ENCODE measurements at regions of chr1 and their contacts with region 1.

Region 1: DNA sequence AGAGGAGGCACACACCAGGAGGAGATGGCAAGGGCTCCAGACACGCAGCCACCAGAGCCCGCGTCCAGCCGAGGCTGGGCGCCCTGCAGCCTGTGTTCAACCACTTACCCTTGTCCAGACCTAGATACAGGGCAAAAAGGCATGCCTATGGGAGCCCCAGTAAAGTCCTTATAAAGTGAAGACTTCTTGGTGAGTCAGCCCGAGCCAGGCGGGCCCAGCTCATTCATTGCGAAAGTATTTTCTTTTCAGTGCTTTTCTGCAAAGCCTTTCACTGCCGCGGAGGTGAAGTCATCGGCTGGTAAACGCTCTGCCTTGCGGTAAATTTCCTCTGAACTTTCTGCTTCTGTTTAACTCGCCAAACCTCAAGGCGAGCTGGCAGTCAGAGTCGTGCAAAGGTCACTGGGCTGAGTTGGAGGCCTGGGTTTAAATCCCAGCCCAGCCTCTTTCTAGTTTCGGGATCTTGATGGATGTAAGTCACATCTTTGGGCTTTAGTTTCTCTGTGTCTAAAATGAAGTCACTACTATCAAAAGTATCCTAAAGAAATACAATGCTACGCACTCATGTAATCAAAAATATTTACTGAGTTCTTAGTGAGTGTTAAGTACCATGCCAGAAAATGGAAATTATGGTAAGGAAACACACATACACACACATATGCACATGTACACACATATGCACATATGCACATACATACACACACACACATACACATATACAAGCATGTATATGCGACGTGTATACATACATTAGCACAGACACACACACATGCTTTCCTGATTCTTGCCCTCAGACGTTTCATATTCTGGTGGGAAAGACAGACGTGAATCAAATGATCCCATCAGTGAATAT is 54.7 kb upstream of the IFFO2 start:
- DNase-seq: peak; percentile 43
- ATAC-seq: peak; percentile 98
- H3K4me3 ChIP-seq: no peak overlapping the region
- H3K27ac ChIP-seq: no peak overlapping the region
- H3K4me1 ChIP-seq: peaks cover 6% of the 10 kb centered on the region
- H3K27me3 ChIP-seq: no peaks in the 10 kb centered on the region; a peak in 2 of 4 replicates
- CTCF ChIP-seq: no peak
- EP300 ChIP-seq: no peak
- POLR2A ChIP-seq: no peak
- RAD21 ChIP-seq: no peak

Region 2: DNA sequence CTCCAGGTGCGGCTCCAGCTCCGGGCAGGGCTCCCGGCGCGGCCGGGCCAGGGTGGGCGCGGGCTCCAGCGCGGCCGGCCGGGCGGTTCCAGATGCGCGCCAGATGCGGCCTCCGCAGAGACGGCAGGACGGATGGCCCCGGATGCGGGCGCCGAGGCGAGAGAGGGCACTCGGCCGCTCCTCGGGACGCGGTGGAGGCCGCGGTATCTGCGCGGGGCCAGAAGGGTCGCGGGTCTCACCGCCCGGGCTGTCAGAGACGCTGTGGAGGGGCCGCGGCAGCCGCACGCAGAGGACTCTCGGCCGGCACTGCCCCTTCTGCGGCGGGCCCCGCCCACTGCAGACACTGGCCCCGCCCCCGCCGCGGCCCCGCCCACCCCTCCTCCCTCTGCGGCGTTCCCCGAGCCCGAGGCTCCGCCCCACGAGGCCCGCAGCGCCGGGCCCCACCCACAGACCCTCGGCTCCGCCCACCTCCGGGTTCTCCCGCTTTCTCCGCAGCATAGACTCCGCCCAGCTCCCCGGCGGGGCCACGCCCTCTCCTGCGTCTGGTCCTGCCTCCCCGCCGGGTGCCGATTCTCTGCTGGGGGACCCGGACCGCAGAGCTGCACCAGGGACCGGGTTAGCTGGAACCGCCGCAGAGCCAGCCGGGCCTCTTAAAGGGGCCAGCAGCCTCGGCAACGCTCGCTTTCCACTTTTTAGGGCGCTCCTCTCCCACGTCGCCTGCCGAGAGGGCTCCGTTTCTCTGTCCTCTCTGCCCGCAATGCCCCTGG is 54.7 kb before region 1 on chr1 and contains the start of gene IFFO2:
- CTCF ChIA-PET with region 1: no interaction called
- POLR2A ChIA-PET with region 1: interaction called, 3 read pairs
- RAD21 ChIA-PET with region 1: no interaction called
- SMC1A ChIA-PET with region 1: no interaction called
- in situ Hi-C with region 1: no loop called
- intact Hi-C with region 1: loop called (anchors 1 kb)
- DNase-seq: peak; percentile 34
- ATAC-seq: peak; percentile 80
- H3K4me3 ChIP-seq: peak within 1 kb of the TSS; percentile 70
- H3K27ac ChIP-seq: peak within 1 kb of the TSS; percentile 8; the same call in 1 of the 2 replicates
- H3K4me1 ChIP-seq: peaks cover 41% of the 10 kb centered on the region
- H3K27me3 ChIP-seq: peaks cover 1 to 3% of the 10 kb centered on the region in 2 experiments; a peak in 3 of 4 replicates
- CTCF ChIP-seq: no peak
- EP300 ChIP-seq: no peak
- POLR2A ChIP-seq: peak; percentile 81
- RAD21 ChIP-seq: no peak
- polyA plus RNA-seq, gene IFFO2: 1.2 to 1.9 TPM

Region 3: DNA sequence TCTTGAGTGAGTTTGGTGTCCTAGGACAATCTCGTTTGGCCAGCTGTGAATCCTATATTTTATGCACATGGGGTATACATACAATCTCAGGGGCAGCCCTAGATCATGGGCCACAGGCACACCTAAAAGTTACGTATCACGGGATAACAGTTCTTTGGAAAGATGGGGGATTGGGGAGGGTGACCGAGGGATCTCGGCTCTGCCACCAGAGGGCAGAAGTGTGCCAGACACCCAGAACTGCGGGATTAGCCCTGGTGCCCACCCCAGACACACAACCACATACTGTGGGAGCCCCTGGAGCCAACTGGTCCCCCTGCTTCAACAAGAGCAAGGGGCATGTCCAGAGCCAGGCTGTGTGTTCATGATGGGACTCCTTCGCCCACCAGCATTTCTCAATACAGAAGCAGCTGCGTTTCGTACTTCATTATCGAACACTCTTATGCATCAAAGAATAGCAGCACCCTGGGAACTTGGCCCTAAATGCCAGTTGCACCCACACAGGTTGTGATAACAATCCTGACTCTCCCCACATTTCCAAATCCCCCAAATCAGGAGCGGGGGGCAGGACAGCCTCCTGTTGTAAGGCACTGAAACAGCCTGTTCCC is 751.1 kb after region 1 on chr1:
- CTCF ChIA-PET with region 1: no interaction called
- POLR2A ChIA-PET with region 1: no interaction called
- RAD21 ChIA-PET with region 1: no interaction called
- SMC1A ChIA-PET with region 1: no interaction called
- in situ Hi-C with region 1: no loop called
- intact Hi-C with region 1: no loop called
- DNase-seq: no peak
- ATAC-seq: peak; percentile 81
- H3K4me3 ChIP-seq: no peak overlapping the region
- H3K27ac ChIP-seq: no peak overlapping the region
- H3K4me1 ChIP-seq: peaks cover 3% of the 10 kb centered on the region
- H3K27me3 ChIP-seq: no peaks in the 10 kb centered on the region
- CTCF ChIP-seq: peak; percentile 63 to 84 (median 80)
- EP300 ChIP-seq: no peak
- POLR2A ChIP-seq: no peak
- RAD21 ChIP-seq: peak; percentile 55

Measured in GM12878 (cell line).